OCI-LY7 (cell line): ENCODE measurements at regions of chr12 and their contacts with region 1.

Region 1: GRCh38 chr12:32455607-32456071 is 56.3 kb downstream of the FGD4 start:
- DNase-seq: peak; percentile 91
- H3K4me3 ChIP-seq: peak overlapping the region; percentile 67
- H3K27ac ChIP-seq: peak overlapping the region; percentile 73
- H3K4me1 ChIP-seq: peaks cover 24% of the 10 kb centered on the region
- CTCF ChIP-seq: peak; percentile 98

Region 2: DNA sequence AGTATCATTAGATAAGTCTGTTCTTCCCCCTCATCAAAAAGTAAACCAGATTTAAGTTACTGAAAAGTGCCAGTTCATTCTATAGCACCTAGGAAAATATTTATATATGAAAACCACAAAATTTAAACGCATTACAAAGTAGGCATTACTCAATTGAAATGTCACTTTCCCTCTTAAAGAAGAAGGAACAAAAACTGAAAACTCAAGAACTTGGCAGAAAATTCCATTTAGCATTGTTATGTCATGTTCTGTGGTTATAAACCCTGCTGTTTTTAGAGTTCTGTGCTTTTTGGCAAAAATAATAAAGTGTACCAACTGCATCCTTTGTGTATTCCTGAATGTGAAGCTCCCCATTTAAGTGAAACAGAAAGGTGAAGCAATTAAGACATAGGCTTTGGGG is 52.7 kb before region 1 on chr12:
- CTCF ChIA-PET with region 1: no interaction called
- POLR2A ChIA-PET with region 1: no interaction called
- intact Hi-C with region 1: no loop called
- DNase-seq: no peak
- H3K4me3 ChIP-seq: no peak overlapping the region
- H3K27ac ChIP-seq: no peak overlapping the region
- H3K4me1 ChIP-seq: peaks cover 36% of the 10 kb centered on the region
- CTCF ChIP-seq: no peak

Region 3: DNA sequence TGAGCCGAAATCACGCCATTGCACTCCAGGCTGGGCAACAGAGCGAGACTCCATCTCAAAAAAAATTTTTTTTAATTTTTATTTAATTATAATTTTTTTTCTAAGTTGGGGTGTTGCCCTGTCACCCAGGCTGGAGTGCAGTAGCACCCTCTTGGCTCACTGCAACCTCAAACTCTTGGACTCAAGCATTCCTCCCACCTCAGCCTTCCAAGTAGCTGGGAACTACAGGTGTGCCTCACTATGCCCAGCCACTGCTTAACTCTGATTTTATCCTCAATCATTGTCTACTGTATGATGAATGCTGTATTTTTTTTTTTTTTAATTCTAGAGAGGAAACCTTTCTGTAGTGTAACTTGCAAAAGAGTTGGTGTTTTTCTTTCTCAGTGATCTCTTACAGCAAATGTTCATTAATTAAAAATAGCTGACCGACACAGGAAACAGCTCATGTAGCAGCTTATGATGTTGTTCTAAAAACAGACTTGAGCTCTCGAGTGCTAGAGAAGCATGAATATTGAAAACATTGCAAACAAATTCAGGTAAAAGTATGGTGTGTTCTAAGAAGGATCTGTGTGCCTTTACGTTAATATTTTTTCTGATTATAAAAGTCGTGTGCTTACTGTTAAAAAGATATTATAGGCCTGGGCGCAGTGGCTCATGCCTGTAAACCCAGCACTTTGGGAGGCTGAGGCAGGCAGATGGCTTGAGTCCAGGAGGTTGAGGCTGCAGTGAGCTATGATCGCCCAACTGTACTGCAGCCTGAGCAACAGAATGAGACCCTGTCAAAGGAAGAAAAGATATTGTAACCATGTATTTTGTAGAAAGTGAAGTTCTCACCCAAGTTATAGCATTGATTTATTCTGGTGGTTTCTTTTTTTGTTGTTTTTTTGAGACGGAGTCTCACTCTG is 12.6 kb after region 1 on chr12:
- CTCF ChIA-PET with region 1: interaction called, 9 read pairs
- POLR2A ChIA-PET with region 1: interaction called, 36 read pairs
- intact Hi-C with region 1: no loop called
- DNase-seq: peak; percentile 80
- H3K4me3 ChIP-seq: peak overlapping the region; percentile 52
- H3K27ac ChIP-seq: peak overlapping the region; percentile 94
- H3K4me1 ChIP-seq: peaks cover 45% of the 10 kb centered on the region
- CTCF ChIP-seq: no peak

Region 4: DNA sequence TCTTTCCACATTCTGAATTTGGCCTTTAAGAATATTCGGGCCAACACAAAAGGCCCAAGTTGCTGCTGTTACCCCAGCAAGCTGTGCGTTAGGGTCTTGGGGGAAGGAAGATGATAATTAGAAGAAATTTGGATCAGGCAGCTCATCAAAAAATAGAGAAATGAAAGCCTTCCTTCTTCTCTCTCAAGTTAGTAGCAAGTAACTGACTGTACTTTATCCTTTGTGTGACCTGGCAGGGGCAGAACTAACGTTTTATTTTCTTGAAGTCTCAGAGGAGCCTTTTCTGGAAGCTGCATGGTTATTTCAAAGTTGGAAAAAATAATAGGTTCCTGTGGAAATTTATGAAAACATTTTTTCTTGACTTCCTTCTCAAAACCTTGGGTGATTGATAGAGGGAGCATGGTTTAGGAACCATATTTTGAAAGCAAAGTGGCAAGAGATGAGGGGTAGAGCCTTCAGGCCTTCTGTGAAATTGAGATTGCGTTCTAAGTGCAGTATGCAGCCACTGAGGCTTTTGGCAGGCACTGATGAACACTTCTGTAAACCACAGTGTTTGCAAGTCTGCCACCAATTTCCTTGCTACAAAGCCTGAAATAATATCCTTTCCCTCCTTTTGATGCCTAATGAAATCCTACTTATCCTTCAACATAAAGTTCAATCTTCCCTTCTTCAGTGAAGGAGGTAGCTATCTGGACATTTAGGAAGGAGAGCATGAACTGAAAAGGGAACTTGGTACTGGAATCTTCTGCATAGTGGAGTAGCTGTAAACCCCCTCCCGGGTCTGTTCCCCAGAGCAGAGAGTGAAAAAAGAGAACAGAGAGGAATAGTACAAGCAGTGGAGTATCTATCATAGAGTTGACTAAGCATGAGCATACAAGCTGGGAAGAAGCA is 66.9 kb after region 1 on chr12:
- CTCF ChIA-PET with region 1: interaction called, 3 read pairs
- POLR2A ChIA-PET with region 1: interaction called, 31 read pairs
- intact Hi-C with region 1: loop called (anchors 2 kb)
- DNase-seq: peak; percentile 75
- H3K4me3 ChIP-seq: peak overlapping the region; percentile 47
- H3K27ac ChIP-seq: peak overlapping the region; percentile 92
- H3K4me1 ChIP-seq: peaks cover 67% of the 10 kb centered on the region
- CTCF ChIP-seq: no peak

Region 5: DNA sequence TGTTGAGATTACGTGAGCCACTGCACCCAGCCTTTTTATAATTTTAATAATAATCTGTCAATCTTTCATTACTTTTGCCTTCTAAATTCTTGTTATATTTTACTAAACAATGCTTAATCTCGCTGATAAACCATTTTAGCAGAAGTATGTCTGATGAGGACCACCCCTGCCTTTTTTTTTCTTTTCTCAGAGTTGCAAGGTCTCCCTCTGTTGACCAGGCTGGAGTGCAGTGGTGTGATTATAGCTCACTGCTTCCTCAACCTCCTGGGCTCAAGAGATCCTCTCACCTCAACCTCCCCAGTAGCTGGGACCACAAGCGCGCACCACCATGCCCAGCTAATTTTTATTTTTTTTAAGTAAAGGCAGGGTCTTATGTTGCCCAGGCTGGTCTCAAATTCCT is 104.9 kb after region 1 on chr12:
- CTCF ChIA-PET with region 1: interaction called, 4 read pairs
- POLR2A ChIA-PET with region 1: interaction called, 8 read pairs
- intact Hi-C with region 1: loop called (anchors 1 kb)
- DNase-seq: peak; percentile 49
- H3K4me3 ChIP-seq: no peak overlapping the region
- H3K27ac ChIP-seq: peak overlapping the region; percentile 84
- H3K4me1 ChIP-seq: peaks cover 38% of the 10 kb centered on the region
- CTCF ChIP-seq: peak; percentile 61

Region 6: DNA sequence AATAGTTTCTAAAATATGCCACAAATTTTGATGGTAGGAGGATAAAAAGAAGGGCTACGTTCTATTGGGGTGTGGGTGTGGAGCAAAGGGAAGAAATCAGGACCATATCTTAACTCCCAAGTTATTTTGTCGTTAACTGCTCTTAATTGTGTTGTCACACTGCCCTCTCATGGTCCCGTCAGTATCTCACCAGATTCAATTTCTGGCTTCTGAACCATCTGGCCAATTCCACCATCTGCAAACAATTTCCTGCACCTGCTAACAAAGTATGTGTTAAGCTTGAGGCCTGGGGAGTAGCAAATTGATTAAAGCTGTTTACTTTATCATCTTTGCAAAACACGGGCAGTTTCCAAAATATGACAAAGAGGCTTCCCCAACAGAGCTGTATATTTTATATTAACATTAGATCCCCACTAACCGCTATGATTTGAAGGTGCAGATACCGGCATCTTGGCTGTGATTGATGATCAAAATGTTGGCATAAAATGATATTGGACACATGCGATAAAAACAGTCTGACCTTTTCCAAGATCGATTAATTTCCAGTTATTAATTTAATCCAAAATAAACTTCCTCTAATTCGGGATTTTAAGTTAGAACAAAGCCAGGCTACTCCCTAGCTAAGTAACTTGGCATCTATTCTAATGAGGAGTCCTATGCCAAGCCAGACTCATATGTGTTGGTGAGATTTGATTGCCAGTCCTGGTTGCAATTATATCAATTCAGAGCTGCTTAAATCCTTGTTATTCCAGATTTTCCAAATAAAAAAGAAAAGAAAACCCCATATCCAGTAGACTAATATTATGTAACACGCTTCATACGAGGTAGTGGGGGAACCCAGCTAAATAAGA is 216.5 kb after region 1 on chr12:
- CTCF ChIA-PET with region 1: interaction called, 12 read pairs
- POLR2A ChIA-PET with region 1: interaction called, 11 read pairs
- intact Hi-C with region 1: loop called (anchors 1 kb)
- DNase-seq: peak; percentile 89
- H3K4me3 ChIP-seq: no peak overlapping the region
- H3K27ac ChIP-seq: peak overlapping the region; percentile 20
- H3K4me1 ChIP-seq: peaks cover 23% of the 10 kb centered on the region
- CTCF ChIP-seq: peak; percentile 88